IMR-90 (cell line): ENCODE measurements at regions of chr4 and their contacts with region 1.

Region 1: GRCh38 chr4:187128222-187128621 is 404.6 kb upstream of the FAT1 start:
- DNase-seq: peak; percentile 41
- ATAC-seq: peak; percentile 69
- H3K4me3 ChIP-seq: no peak overlapping the region
- H3K27ac ChIP-seq: no peak overlapping the region
- H3K4me1 ChIP-seq: no peaks in the 10 kb centered on the region
- H3K27me3 ChIP-seq: no peaks in the 10 kb centered on the region
- CTCF ChIP-seq: no peak
- POLR2A ChIP-seq: no peak
- RAD21 ChIP-seq: no peak

Region 2: DNA sequence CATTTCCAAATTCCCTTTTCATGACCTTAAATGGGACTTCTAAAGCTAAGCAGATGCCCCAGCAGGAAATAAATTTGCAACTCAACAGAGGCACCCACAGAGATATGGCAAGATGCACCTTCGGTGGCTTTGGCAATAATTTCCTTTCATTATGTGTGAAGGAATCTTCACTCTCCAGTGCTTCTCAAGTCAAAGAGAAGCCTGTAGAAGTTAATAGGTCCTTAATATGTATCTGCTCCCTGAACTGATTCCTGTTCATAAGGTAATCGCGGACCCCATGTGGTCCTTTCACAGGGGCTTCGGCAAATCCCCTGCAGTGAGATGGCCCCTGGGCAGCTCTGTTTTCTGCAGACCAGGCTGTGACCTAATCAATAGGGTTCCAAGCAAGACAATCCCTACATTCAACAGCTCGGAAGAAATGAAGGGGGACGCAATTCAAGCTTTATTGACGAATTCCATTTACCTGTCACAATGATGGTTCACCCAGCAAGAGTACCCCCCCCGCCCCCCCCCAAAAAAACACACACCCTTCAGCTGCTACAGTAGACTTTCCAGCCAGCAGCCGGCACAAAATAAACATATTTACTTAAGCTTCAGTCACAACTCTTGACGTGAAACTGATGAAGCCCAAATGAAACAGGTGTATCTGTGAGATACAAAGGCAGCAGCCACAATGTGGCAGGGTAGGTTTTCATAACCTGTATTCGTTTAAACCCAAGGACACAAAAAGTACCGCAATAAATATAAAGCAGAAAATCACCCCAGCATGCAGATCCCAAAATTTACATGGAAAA is 439.9 kb before region 1 on chr4:
- CTCF ChIA-PET with region 1: no interaction called
- POLR2A ChIA-PET with region 1: interaction called, 10 read pairs
- dilution Hi-C with region 1: no loop called
- in situ Hi-C with region 1: no loop called
- intact Hi-C with region 1: no loop called
- DNase-seq: no peak
- ATAC-seq: no peak
- H3K4me3 ChIP-seq: no peak overlapping the region
- H3K27ac ChIP-seq: peak overlapping the region; percentile 33; the same call in 1 of the 2 replicates
- H3K4me1 ChIP-seq: peaks cover 30% of the 10 kb centered on the region
- H3K27me3 ChIP-seq: no peaks in the 10 kb centered on the region
- CTCF ChIP-seq: no peak
- POLR2A ChIP-seq: no peak
- RAD21 ChIP-seq: no peak